HEK293T (cell line): ENCODE measurements at regions of chr11 and their contacts with region 1.

Region 1: DNA sequence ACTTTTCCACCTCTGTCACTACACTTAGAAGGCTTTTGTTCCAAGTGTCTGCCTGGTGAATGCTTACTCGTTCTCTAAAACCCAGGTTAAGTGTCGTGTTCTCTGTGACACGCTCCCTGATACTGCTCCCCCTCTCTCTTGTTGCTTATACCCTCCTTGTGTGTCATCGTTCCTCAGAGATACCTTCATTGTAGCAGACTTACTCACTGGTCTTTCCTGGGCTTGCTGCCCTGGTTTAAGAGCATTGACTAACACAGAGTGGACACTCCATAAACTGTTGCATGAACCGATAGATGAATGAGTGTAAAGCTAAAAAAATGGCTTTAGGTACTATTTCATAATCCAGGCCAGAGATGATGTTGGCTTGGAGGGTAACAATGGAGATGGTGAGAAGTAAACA is 171.3 kb downstream of the GRIK4 start:
- DNase-seq: no peak

Region 2: GRCh38 chr11:120511116-120511819 is 171.6 kb before region 1 on chr11 and contains the start of gene GRIK4:
- CTCF ChIA-PET with region 1: interaction called, 14 read pairs
- POLR2A ChIA-PET with region 1: interaction called, 4 read pairs
- DNase-seq: peak; percentile 93

Region 3: DNA sequence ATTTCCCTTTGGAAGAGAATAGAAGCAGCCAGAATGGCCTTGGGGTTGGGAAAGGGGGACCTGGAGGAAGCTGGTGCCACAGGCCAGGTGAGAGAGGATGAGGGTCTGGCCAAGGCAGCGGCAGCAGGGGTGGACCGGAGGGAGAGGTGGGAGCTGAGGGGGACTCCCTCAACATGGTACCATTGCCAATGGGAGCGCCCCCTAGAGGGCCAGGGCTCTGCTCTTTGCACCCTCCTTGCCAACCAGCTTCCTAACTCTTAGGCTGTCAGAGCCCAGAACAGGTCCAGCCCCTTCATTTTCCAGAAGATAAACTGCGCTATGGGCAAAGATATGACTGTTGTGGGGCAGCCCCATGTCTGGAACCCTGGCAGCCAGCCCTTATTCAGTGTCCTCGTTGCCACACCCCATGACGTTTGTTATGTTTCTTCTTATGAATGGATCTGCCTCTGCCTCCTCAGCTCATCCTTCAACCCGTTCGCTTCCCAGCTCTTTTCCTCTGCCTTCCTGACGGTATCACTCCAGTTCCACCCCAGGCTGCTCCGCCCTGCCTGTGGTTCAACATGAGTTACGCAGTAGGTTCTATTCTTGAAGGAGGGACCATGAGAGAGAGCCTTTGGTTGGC is 13.8 kb after region 1 on chr11:
- CTCF ChIA-PET with region 1: interaction called, 18 read pairs
- POLR2A ChIA-PET with region 1: no interaction called
- DNase-seq: no peak